PC-3 (cell line): ENCODE measurements at regions of chr13 and their contacts with region 1.

Region 1: DNA sequence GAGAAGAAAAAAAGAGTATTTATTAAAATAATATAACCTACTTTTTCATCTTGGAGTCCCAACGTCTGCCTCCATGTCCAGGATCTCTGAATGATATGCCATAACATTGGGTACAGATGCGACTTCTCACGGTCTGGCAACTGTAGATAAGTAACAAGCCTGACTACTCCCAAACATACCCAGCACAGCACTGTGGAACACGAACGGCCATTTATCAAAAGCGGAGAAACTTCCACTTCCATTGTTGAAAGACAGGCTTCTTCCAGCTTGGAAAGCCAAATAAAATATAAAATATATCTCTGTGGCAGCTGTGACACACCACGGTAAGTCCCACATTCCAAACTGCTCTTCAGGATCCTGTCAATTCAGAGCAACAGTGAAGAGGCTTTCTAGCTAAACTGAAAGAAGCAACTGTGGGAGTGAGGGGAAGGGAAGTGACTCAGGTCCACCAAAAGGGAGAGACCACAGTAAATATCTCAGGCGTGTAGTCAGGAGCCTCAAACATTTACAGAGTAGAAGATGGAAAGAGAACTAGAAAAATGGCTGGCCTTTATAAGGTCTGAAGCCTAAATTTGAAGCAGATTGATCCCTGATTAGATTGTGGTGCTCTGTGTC is 331.7 kb downstream of the LIG4 start:
- DNase-seq: peak; percentile 93
- ATAC-seq: peak; percentile 80
- H3K4me3 ChIP-seq: peak overlapping the region; percentile 58
- H3K27ac ChIP-seq: peak overlapping the region; percentile 76
- H3K4me1 ChIP-seq: peaks cover 59% of the 10 kb centered on the region
- H3K27me3 ChIP-seq: no peaks in the 10 kb centered on the region
- CTCF ChIP-seq: no peak

Region 2: DNA sequence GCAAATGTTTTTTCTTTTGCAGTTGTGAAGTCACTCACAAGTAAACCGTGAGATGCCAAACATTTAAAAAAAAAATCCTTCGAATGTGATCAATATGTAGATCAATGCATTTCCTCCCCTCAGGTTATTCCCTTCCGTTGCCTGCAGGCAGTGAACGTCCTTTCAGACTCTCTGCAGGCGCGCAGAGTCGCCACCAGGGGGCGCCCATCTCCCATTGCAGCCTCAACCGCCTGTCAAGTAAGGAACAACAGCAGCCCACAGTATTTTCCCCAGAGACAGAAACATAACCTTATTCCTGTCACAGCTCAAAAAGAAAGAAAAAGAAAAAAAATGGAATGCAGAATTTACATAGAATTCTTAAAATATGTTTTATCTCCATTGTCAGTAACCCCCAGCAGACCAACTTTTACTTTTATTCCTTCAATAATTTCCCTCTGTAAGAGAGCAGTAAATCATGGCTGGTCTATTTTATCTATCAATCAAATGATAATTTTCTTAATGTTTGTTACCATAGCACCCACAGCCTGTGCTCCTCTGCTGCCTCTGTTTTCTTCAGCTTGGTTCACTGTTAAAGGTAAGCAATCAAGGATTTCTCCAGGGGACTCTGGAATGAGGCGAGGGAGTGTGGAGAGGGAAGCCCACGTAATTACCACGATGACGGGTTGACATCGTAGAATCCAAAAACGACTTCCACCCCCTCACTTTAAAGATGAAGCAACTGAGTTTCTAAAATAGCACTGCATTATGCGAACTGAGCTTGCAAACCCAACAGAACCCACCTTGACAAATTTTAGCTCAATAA is 678.2 kb before region 1 on chr13:
- CTCF ChIA-PET with region 1: no interaction called
- POLR2A ChIA-PET with region 1: no interaction called
- intact Hi-C with region 1: loop called (anchors 5 kb)
- DNase-seq: peak; percentile 60
- ATAC-seq: peak; percentile 82
- H3K4me3 ChIP-seq: no peak overlapping the region
- H3K27ac ChIP-seq: no peak overlapping the region
- H3K4me1 ChIP-seq: peaks cover 11% of the 10 kb centered on the region; the same call in 1 of the 2 replicates
- H3K27me3 ChIP-seq: no peaks in the 10 kb centered on the region
- CTCF ChIP-seq: peak; percentile 93

Region 3: DNA sequence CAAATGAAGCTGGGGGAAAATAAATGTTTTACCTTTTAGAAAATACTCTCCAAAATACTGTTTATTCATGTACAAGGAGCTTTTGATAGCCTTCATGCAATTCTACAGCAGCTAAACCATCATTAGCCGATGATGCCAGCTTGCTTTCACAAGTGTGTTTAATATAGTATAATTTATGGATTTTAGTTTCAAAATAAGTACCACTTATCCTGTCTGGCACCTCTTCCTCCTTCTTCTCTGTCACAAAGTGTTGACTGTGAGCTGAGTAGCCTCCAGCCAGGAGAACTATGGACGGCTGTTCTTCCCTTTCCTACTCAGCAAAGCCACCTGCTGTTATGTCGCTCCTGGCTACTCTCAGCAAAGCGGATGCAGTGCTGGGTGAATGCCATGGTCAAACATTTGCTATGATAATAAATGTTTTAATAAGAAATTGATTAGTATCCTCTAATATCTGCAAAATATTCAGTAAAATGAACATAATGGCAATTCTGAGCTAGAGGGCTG is 93.5 kb after region 1 on chr13:
- CTCF ChIA-PET with region 1: no interaction called
- POLR2A ChIA-PET with region 1: no interaction called
- intact Hi-C with region 1: no loop called
- DNase-seq: no peak
- ATAC-seq: no peak
- H3K4me3 ChIP-seq: no peak overlapping the region
- H3K27ac ChIP-seq: no peak overlapping the region
- H3K4me1 ChIP-seq: no peaks in the 10 kb centered on the region
- H3K27me3 ChIP-seq: no peaks in the 10 kb centered on the region
- CTCF ChIP-seq: no peak

Region 4: DNA sequence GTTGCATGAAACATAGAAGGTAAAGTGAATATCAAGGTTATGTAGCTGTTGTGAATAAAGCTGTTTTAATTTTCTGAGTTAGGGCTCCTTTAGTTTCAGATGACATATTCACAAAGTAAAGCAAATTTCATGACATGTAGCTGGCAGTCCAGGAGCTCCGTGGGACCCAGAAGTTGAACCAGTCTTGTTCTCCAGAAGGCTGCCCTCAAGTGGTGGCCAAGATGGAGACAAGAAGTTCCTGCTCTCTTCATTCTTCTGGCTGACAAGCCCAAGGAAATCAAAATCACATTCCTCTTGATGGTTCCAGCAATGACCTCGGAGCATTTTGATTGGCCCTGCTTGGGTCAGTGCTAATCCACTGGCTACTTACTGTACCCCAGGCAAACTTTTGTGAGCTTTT is 203.0 kb after region 1 on chr13:
- CTCF ChIA-PET with region 1: no interaction called
- POLR2A ChIA-PET with region 1: no interaction called
- intact Hi-C with region 1: loop called (anchors 5 kb)
- DNase-seq: peak; percentile 51
- ATAC-seq: peak; percentile 35; the same call in 1 of the 2 replicates
- H3K4me3 ChIP-seq: no peak overlapping the region
- H3K27ac ChIP-seq: no peak overlapping the region
- H3K4me1 ChIP-seq: 0 out of 2 replicates have a peak, but pooled peaks cover 9% of the 10 kb centered on the region
- H3K27me3 ChIP-seq: no peaks in the 10 kb centered on the region
- CTCF ChIP-seq: peak; percentile 59

Region 5: GRCh38 chr13:108096296-108096915 is 212.7 kb after region 1 on chr13:
- CTCF ChIA-PET with region 1: no interaction called
- POLR2A ChIA-PET with region 1: no interaction called
- intact Hi-C with region 1: loop called (anchors 1 kb)
- DNase-seq: peak; percentile 75
- ATAC-seq: peak; percentile 83
- H3K4me3 ChIP-seq: no peak overlapping the region
- H3K27ac ChIP-seq: peak overlapping the region; percentile 27
- H3K4me1 ChIP-seq: peaks cover 17% of the 10 kb centered on the region
- H3K27me3 ChIP-seq: no peaks in the 10 kb centered on the region
- CTCF ChIP-seq: no peak

Region 6: DNA sequence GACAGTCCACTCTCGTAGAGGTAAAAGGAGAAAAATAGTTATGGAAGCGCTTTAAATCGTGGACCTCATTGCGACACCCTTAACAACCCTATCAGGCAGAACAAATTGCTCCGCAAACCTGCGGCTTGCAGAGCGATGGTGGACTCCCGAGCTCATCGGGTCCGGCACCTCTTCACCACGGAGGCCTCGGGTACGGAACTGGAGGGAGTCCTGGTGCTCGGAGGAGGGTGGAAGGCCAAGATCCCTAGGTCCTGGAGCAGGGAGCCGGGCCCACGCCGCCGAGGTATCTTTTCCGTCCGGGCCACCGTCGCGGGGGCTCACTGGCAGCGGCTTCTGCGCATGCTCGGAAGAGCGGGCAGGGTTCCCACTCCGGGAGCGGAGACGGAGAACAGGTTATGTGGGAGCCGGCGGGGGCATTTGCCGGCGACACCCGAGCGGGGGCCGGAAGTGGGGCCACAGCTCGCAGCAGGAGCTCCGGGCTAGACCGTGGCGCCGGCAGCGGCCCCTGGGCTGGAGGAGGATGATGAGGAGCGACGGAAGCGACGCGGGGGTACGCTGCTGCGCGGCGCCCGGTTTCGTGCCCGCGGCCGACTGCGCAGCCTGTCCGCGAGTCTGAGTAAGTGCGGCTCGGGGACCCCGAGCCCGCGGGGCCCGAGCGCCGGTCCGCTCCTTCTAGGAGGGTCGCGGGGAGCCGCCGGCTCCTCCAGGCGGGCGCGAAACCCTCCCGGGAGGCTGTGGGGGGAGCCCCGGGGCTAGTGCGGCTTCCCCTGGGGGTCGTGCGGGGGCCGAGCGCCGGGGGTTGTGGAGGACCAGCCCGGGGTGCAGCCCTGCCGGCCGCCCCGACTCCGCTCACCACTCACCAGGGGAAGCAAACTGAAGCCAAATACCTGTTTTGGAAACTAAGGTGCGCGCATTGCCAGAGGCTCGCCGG is 334.6 kb after region 1 on chr13 and contains the start of gene ABHD13:
- CTCF ChIA-PET with region 1: no interaction called
- POLR2A ChIA-PET with region 1: no interaction called
- intact Hi-C with region 1: loop called (anchors 5 kb)
- DNase-seq: peak; percentile 95
- ATAC-seq: peak; percentile 71
- H3K4me3 ChIP-seq: peak within 1 kb of the TSS; percentile 83
- H3K27ac ChIP-seq: peak within 1 kb of the TSS; percentile 45
- H3K4me1 ChIP-seq: peaks cover 27% of the 10 kb centered on the region; the same call in 1 of the 2 replicates
- H3K27me3 ChIP-seq: no peaks in the 10 kb centered on the region
- CTCF ChIP-seq: no peak
- total RNA-seq, gene ABHD13: 2.9 and 3.9 TPM in 2 replicates